Caco-2 (cell line): ENCODE measurements at regions of chrX and their contacts with region 1.

Region 1: GRCh38 chrX:65034668-65035445 is 58.6 kb upstream of the ZC4H2 start:
- DNase-seq: peak; percentile 84 to 86
- H3K4me3 ChIP-seq: peak within 1 kb of the TSS; percentile 75
- H3K4me3 Mint-ChIP-seq: peak within 1 kb of the TSS; percentile 77
- H3K27ac Mint-ChIP-seq: peak within 1 kb of the TSS; percentile 87
- H3K4me1 ChIP-seq: no peaks in the 10 kb centered on the region
- H3K4me1 Mint-ChIP-seq: peaks cover 8% of the 10 kb centered on the region
- H3K27me3 ChIP-seq: no peaks in the 10 kb centered on the region
- H3K27me3 Mint-ChIP-seq: no peaks in the 10 kb centered on the region
- CTCF ChIP-seq: peak; percentile 41 to 50

Region 2: DNA sequence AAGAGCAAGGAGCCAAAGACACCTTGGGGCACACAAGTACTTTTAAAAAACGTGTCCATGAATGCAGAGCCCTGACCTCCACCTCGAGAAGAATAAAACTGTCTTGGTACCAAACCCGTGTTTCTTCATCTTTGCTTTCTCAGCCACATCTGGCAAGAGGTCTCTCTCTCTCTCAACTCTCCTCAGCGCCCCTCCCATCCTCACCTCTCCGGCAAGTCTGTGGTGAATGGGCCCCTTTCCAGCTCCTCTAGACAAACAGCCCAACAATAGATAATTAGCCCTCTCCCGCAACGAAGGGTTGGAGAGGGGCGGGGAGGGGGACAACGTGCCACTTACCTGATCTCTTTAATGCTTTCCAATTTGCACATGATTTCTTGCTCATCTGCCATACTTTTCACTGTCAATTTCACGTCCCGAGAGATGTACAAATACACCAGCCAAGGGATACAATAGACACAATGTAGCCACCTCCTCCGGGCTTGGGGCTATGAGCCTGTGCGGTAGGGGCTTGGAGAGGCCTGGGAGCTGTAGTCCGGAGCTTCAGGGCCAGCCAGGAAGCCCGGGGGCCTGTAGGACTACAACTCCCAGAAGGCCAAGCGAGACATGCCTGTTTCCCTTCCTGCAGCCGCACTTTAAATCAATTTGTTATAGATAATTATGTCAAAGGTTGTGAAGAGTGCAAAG is 58.7 kb before region 1 on chrX and contains the start of gene ZC4H2:
- CTCF ChIA-PET with region 1: no interaction called
- POLR2A ChIA-PET with region 1: interaction called, 4 read pairs
- intact Hi-C with region 1: loop called (anchors 1 kb)
- DNase-seq: peak; percentile 70 to 71
- H3K4me3 ChIP-seq: peak within 1 kb of the TSS; percentile 67
- H3K4me3 Mint-ChIP-seq: peak within 1 kb of the TSS; percentile 90
- H3K27ac Mint-ChIP-seq: peak within 1 kb of the TSS; percentile 73
- H3K4me1 ChIP-seq: no peaks in the 10 kb centered on the region
- H3K4me1 Mint-ChIP-seq: peaks cover 4% of the 10 kb centered on the region
- H3K27me3 ChIP-seq: no peaks in the 10 kb centered on the region
- H3K27me3 Mint-ChIP-seq: no peaks in the 10 kb centered on the region
- CTCF ChIP-seq: no peak
- total RNA-seq, gene ZC4H2: 7.3 and 7.6 TPM in 2 replicates

Region 3: DNA sequence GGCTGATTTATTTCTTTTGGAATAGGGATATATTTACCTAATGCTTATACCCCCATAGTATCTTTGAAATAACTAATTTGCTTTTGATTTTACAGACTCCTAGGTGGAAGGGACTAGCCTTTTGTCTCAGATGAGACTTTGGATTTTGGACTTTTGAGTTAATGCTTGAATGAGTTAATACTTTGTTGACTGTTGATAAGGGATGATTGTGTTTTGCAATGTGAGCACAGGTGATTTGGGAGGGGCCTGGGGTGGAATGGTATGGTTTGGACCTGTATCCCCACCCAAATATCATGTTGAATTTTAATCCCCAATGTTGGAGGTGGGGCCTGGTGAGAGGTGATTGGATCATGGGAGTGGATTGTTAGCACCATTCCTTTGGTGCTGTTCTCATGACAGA is 58.8 kb after region 1 on chrX:
- CTCF ChIA-PET with region 1: no interaction called
- POLR2A ChIA-PET with region 1: no interaction called
- intact Hi-C with region 1: loop called (anchors 10 kb)
- DNase-seq: peak; percentile 53 to 54
- H3K4me3 ChIP-seq: no peak overlapping the region
- H3K4me3 Mint-ChIP-seq: peak overlapping the region; percentile 7
- H3K27ac Mint-ChIP-seq: peak overlapping the region; percentile 43
- H3K4me1 ChIP-seq: peaks cover 30% of the 10 kb centered on the region
- H3K4me1 Mint-ChIP-seq: peaks cover 7% of the 10 kb centered on the region
- H3K27me3 ChIP-seq: no peaks in the 10 kb centered on the region
- H3K27me3 Mint-ChIP-seq: no peaks in the 10 kb centered on the region
- CTCF ChIP-seq: no peak

Region 4: DNA sequence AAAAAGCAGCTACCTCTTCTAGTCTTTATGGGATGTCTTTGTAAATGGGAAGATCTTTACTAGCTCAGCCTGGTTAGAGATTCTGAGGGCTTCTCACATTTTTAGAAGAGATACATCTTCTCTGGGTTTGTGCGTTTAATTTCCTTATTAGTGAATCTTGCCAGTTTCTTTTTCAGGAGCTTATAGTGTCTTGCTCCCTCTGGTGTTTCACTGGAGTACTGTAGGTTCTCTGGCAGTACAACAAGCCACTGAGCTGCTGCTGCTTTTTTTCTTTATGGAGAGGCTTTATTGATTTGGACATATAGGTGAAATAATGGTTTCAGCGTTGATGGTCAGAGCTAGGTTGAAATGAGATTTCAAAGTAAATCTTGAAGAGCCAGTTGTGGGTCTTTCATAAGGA is 416.8 kb after region 1 on chrX:
- CTCF ChIA-PET with region 1: no interaction called
- POLR2A ChIA-PET with region 1: interaction called, 3 read pairs
- intact Hi-C with region 1: loop called (anchors 1 kb)
- DNase-seq: peak in 1 of 2 experiments; percentile 24
- H3K4me3 ChIP-seq: no peak overlapping the region
- H3K4me3 Mint-ChIP-seq: no peak overlapping the region
- H3K27ac Mint-ChIP-seq: no peak overlapping the region
- H3K4me1 ChIP-seq: no peaks in the 10 kb centered on the region
- H3K4me1 Mint-ChIP-seq: no peaks in the 10 kb centered on the region
- H3K27me3 ChIP-seq: no peaks in the 10 kb centered on the region
- H3K27me3 Mint-ChIP-seq: no peaks in the 10 kb centered on the region
- CTCF ChIP-seq: peak; percentile 37 to 48

Region 5: DNA sequence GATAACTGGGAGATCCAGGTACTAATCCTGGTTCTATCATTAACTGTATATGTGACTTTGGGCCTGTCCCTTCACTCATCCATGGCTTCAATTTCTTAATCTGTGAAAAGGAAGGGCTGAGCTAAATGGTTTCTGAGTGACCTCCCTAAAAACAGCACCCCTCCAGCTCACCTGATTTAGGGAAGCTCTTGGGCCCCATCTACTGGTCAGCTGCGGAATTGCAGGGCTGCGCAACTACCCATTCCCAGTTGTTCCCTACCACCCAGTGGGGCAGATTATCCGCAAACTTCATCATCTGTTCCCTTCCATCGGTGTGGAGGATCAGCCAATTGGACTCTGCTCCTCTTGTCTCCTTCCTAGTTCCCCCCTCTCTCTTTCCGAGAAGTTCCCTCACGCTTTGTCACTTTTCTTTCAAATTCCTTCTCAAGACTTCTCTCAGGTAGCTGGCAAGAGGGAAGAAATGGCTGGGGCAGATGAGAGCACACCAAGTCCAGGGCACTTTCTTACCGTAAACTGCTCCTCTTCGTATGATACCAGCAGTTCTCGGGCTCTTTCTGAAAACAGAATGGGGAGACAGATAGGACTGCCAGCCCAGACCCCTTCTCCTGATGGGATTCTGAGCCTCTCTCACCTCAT is 494.0 kb after region 1 on chrX:
- CTCF ChIA-PET with region 1: no interaction called
- POLR2A ChIA-PET with region 1: no interaction called
- intact Hi-C with region 1: loop called (anchors 5 kb)
- DNase-seq: peak in 1 of 2 experiments; percentile 49
- H3K4me3 ChIP-seq: no peak overlapping the region
- H3K4me3 Mint-ChIP-seq: no peak overlapping the region
- H3K27ac Mint-ChIP-seq: no peak overlapping the region
- H3K4me1 ChIP-seq: no peaks in the 10 kb centered on the region
- H3K4me1 Mint-ChIP-seq: no peaks in the 10 kb centered on the region
- H3K27me3 ChIP-seq: no peaks in the 10 kb centered on the region
- H3K27me3 Mint-ChIP-seq: no peaks in the 10 kb centered on the region
- CTCF ChIP-seq: peak; percentile 81 to 83